Activated T-helper 1 cell treated with anti-CD3 and anti-CD28 coated beads, Interleukin-12 subunit alpha, Interleukin-12 subunit beta, Interleukin-2, Interleukin-4 antibody, amounts not matched to agents 30 ng/mL and 10 ng/mL and 1 ng/mL, durations not matched to agents 14 hours and 24 hours and 36 hours (primary cell): ENCODE measurements at regions of chr4 and their contacts with region 1.

Region 1: GRCh38 chr4:80173401-80173800 is 23.9 kb upstream of the PRDM8 start:
- DNase-seq: peak; percentile 66
- H3K4me3 Mint-ChIP-seq: peak overlapping the region; percentile 50
- H3K27ac Mint-ChIP-seq: peak overlapping the region; percentile 92
- H3K4me1 Mint-ChIP-seq: peaks cover 68% of the 10 kb centered on the region
- H3K27me3 Mint-ChIP-seq: no peaks in the 10 kb centered on the region

Region 2: DNA sequence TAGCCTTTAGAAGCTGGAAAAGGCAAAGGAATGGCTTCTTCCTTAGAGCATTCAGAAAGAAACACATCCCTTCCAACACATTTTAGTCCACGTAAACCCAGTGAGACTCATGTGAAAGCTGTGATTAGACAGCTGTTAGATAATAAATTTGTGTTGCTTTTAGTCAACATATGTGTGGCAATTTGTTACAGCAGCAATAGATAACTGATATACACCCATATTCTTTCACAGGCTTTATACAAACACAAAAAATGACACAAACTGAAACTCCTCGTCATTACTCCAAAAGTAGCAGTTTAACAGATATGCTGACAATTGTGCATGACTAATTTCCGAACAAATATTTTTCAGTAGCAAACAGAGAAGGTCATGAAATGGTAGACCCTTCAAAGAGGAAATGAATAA is 165.7 kb before region 1 on chr4:
- intact Hi-C with region 1: loop called (anchors 1 kb)
- DNase-seq: no peak
- H3K4me3 Mint-ChIP-seq: peak overlapping the region; percentile 41
- H3K27ac Mint-ChIP-seq: peak overlapping the region; percentile 88
- H3K4me1 Mint-ChIP-seq: peaks cover 74% of the 10 kb centered on the region
- H3K27me3 Mint-ChIP-seq: no peaks in the 10 kb centered on the region

Region 3: DNA sequence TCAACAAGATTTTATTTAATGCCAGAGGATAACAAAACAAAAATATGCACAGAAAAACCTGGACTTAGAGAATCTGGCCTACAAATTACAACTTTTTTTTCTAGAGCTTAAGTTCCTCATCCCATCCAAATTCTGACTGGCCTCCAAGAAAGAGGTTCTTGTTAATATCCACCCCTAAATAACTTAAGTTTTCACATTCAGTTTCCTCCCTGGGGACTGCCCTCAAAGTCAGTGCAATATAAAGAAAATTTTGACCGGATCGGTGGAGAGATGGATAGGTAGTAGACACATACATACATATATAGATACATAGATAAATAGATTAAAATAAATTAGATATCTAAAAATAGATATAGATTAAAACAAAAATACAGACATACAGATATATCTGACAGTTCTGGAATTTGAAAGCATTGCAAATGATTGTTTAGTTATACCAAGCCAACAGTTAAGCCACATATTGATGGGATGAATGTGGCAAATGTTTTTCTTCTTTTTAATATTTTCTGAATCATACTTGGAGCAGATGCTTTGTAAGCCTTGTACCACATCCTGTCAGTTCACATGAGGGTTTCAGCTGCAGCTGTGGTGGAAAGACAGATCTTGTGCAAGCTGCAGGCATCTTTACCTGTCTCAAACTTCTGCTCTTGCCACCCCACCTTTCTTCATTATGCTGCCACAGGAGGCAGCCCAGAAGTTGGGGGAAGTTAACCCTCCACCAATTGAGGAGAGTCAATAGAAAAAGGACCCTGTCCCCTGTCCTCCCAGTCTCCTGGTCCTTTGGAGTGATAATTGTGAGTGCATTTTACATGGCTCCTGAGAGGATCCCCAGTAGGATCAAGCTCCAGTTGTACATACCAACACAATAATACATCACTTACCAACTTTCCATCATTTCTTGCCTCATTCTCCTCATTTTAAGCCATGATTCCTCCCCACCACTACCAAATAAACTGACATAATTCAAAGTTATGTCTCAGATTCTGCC is 34.6 kb before region 1 on chr4:
- intact Hi-C with region 1: loop called (anchors 1 kb)
- DNase-seq: peak; percentile 62
- H3K4me3 Mint-ChIP-seq: peak overlapping the region; percentile 62
- H3K27ac Mint-ChIP-seq: peak overlapping the region; percentile 88
- H3K4me1 Mint-ChIP-seq: peaks cover 72% of the 10 kb centered on the region
- H3K27me3 Mint-ChIP-seq: no peaks in the 10 kb centered on the region

Region 4: DNA sequence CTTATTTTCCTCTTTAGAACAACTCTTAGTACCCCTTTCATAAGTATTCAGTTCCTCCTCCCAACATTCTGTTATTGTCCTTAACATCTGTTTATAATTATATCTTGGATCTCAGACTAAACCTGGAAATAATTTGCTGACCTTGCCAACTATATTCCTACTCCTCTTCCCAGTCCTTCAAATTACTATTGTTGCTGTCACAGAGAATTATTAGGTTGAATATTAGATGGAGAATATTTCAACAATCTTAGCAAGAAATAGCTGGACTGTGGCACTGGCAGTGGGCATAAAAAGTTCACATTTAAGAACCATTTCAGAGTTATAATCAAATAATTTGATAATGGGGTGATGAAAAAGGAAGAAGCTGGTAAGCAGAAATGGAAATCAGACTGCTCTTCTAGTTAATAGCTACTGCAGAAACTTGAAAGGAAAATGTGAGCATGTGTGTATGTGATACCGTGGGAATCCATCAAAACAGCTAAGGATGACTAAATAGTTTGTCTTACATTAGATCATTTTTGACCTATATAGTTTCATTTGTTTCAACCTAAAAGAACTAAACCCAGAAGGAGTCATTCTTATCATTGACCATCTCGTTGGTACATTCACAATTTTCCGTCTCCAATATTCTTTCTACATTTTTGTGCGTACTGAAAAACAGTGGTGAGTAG is 19.4 kb before region 1 on chr4:
- intact Hi-C with region 1: loop called (anchors 1 kb)
- DNase-seq: no peak
- H3K4me3 Mint-ChIP-seq: peak overlapping the region; percentile 21
- H3K27ac Mint-ChIP-seq: peak overlapping the region; percentile 90
- H3K4me1 Mint-ChIP-seq: peaks cover 27% of the 10 kb centered on the region
- H3K27me3 Mint-ChIP-seq: peaks cover 3% of the 10 kb centered on the region

Region 5: DNA sequence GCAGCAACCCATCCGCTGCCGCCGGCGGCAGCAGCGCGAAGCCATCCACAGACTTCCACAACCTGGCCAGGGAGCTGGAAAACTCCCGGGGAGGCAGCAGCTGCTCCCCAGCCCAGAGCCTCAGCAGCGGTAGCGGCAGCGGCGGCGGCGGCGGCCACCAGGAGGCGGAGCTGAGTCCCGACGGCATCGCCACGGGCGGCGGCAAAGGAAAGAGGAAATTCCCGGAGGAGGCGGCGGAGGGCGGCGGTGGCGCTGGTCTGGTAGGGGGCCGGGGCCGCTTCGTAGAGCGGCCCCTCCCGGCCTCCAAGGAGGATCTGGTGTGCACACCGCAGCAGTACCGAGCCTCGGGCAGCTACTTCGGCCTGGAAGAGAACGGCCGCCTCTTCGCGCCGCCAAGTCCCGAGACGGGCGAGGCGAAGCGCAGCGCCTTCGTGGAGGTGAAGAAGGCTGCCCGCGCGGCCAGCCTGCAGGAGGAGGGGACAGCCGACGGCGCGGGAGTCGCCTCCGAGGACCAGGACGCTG is 28.9 kb after region 1 on chr4:
- intact Hi-C with region 1: loop called (anchors 1 kb)
- DNase-seq: peak; percentile 79
- H3K4me3 Mint-ChIP-seq: peak overlapping the region; percentile 80
- H3K27ac Mint-ChIP-seq: peak overlapping the region; percentile 73
- H3K4me1 Mint-ChIP-seq: peaks cover 29% of the 10 kb centered on the region
- H3K27me3 Mint-ChIP-seq: peaks cover 21% of the 10 kb centered on the region